ENCODE measurements at regions of chr17 and their contacts with region 1.

Region 1: DNA sequence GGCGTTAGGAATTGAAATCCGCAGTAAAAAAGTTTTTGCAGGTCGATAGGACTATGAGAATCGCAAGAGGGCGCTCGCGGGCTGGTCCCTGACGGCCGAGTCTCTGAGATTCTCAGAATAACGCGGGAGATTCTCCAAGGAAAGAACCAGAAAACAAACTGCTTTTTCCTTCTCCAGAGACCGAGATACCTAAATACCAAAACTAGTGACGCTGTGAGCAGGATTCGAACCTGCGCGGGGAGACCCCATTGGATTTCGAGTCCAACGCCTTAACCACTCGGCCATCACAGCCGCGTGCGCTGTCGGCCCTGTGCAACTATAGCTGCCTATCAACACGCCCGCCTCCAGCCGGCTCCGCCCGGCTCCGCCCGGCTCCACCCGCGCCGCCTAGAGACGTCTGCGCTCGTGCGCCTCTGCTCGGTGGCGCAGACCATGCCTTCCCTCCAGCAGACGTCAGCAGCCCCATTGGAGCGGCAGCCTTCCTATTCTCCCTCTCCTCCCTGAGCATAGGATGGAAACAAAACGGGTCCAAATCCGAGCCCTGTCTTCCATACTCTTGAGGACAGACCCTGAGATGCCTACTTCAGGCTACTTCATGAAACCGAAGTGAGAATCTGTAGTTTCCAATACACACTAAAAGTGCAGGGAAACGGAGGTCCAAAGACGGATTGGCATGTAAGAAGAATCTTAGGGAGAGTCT is 13.4 kb downstream of the PER1 start:
- DNase-seq: peak; percentile 92 to 99
- H3K4me3 ChIP-seq: peak overlapping the region; percentile 78
- H3K27ac ChIP-seq: peak overlapping the region; percentile 69
- H3K4me1 ChIP-seq: peaks cover 14% of the 10 kb centered on the region
- H3K27me3 ChIP-seq: no peaks in the 10 kb centered on the region
- CTCF ChIP-seq: peak; percentile 78

Region 2: GRCh38 chr17:8126531-8127066 is 12.2 kb before region 1 on chr17:
- CTCF ChIA-PET with region 1: no interaction called
- POLR2A ChIA-PET with region 1: no interaction called
- intact Hi-C with region 1: loop called (anchors 1 kb)
- DNase-seq: peak in 1 of 2 experiments; percentile 61
- H3K4me3 ChIP-seq: peak overlapping the region; percentile 81
- H3K27ac ChIP-seq: peak overlapping the region; percentile 34; the same call in 1 of the 2 replicates
- H3K4me1 ChIP-seq: peaks cover 12% of the 10 kb centered on the region; the same call in 1 of the 2 replicates
- H3K27me3 ChIP-seq: no peaks in the 10 kb centered on the region
- CTCF ChIP-seq: no peak

Region 3: DNA sequence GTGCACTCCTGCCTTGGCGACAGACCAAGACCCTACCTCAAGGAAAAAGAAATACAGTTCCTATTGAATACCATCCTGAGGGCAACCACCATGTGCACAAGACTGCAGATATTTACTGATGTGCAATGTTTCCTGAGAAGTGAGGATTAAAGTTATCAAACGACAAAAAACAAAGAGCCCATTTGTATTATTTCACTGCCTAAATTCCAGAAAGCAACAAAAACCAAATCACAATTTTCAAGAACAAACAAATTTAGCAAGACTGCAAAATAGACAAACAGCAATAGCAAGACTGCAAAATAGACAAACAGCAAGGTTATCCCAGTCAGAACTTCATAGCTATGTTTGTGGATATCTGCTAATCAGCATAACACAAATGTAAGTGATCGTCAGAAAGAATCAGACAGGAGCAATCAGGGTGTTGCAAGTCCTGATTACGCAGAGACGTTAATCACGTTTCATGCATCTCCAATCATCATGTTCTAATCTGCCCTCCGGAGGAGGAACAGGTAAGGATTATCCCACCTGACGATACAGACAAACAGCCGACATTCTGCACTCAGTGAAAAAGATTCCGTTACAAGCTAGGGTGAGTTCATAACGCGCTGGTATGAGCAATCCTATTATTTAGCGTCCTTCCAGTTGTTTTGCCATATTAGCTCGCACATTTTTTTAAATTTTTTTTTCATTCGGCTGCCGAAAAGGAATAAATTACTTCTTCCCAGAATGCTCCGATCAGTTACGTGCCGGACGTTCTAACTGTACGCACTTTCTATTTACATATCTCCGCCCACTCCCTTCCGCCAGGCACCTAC is 34.4 kb after region 1 on chr17:
- CTCF ChIA-PET with region 1: no interaction called
- POLR2A ChIA-PET with region 1: interaction called, 6 read pairs
- intact Hi-C with region 1: loop called (anchors 1 kb)
- DNase-seq: peak; percentile 79 to 96
- H3K4me3 ChIP-seq: peak overlapping the region; percentile 63
- H3K27ac ChIP-seq: peak overlapping the region; percentile 93
- H3K4me1 ChIP-seq: 0 out of 2 replicates have a peak, but pooled peaks cover 7% of the 10 kb centered on the region
- H3K27me3 ChIP-seq: no peaks in the 10 kb centered on the region
- CTCF ChIP-seq: no peak

Region 4: DNA sequence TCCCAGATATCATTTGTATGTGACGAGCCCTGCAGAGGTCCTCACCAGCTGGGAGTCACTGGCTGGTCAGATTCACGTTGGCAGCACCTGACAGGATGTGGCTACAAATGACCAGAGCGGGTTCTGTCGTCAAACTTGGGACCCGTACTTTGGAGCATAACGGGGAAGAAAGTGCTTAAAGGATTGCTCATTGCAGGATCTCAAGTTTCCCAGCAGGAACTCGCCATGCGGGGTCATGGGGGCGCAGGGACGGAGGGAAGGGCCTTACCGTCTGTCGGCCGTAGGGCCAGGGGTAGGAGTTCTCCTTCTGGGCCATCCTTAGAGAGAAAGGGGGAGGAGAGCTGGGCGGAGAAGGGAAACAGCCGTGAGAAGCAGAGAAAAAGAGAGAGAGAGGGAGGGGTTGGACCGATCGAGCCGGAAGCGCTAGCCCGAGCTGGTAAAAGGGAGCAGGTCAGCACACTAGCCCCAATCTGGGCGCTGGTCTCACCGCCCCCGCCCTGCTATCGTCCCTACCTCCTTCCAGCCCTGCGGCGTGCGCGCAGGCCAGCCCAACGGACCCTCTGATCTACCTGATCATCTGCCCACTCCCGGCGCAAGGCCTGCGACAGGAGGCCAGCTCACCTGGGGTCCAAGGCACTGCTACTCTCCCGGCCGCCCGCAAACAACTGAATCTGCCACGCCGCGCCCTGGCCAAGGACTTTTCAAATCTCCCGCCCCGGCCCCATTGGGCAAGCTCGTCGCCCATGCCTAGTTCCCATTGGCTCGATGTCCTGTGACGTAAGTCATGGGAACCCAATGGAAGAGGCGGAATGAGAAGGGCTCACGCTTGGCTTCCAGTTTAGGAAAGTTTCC is 71.3 kb after region 1 on chr17 and contains the start of gene AURKB:
- CTCF ChIA-PET with region 1: no interaction called
- POLR2A ChIA-PET with region 1: interaction called, 10 read pairs
- intact Hi-C with region 1: no loop called
- DNase-seq: peak; percentile 84 to 96
- H3K4me3 ChIP-seq: peak within 1 kb of the TSS; percentile 70
- H3K27ac ChIP-seq: peak within 1 kb of the TSS; percentile 55
- H3K4me1 ChIP-seq: peaks cover 12% of the 10 kb centered on the region
- H3K27me3 ChIP-seq: no peaks in the 10 kb centered on the region
- CTCF ChIP-seq: no peak
- total RNA-seq, gene AURKB: 159 and 167 TPM in 2 replicates

Region 5: GRCh38 chr17:9576521-9577372 is 1437.9 kb after region 1 on chr17 and contains the start of gene CFAP52:
- CTCF ChIA-PET with region 1: no interaction called
- POLR2A ChIA-PET with region 1: no interaction called
- intact Hi-C with region 1: no loop called
- DNase-seq: peak; percentile 51 to 73
- H3K4me3 ChIP-seq: peak within 1 kb of the TSS; percentile 82
- H3K27ac ChIP-seq: no peak within 1 kb of the TSS
- H3K4me1 ChIP-seq: no peaks in the 10 kb centered on the region
- H3K27me3 ChIP-seq: no peaks in the 10 kb centered on the region
- CTCF ChIP-seq: peak; percentile 49
- total RNA-seq, gene CFAP52: not detected in 2 replicates

Measured in PC-9 (cell line).